Activated naive CD4-positive, alpha-beta T cell treated with anti-CD3 and anti-CD28 coated beads for 36 hours (primary cell): ENCODE measurements at regions of chr1 and their contacts with region 1.

Region 1: DNA sequence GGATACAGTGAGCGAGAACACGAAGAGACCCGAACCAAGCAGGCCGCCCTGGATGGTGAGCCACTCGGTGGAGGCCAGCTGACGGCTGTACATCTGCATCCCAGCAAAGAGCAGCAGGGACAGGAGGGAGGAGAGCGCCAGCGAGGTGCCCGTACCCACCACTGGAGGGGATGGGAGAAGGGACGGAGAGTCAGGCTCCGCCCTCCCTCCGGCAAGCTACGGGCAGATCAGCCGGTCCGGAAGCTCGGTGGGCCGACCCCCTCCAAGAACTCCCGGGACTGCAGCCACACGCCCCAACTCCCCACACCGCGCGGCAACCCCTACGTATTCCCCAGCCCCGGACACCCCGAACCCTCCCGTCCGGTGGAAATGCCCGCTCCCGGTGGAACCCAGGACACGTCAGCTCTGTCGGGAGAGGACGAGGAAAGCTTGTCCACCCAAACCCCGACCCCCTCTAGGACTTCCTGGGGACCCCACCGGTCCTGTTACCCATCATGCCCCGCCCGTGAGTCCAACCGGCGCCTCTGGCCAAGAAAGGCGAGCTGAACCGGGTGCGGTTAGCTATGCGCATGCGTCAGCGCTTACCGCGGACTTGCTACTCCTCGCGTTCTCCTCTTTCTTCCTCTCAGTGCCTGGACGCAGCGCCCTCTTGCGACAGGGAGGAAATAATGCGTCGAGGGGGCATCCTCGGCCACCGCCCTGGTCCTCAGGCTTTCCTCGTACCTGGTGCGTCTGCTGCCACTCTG is at the start of gene KRTCAP2:
- DNase-seq: peak; percentile 98
- H3K4me3 Mint-ChIP-seq: peak within 1 kb of the TSS; percentile 93
- H3K27ac Mint-ChIP-seq: peak within 1 kb of the TSS; percentile 97
- H3K4me1 Mint-ChIP-seq: peaks cover 46% of the 10 kb centered on the region
- H3K27me3 Mint-ChIP-seq: no peaks in the 10 kb centered on the region
- total RNA-seq, gene KRTCAP2: 129 to 137 TPM

Region 2: GRCh38 chr1:155091071-155091709 is 81.7 kb before region 1 on chr1:
- CTCF ChIA-PET with region 1: interaction called, 234 read pairs
- intact Hi-C with region 1: no loop called
- DNase-seq: peak; percentile 84
- H3K4me3 Mint-ChIP-seq: no peak overlapping the region
- H3K27ac Mint-ChIP-seq: no peak overlapping the region
- H3K4me1 Mint-ChIP-seq: peaks cover 6% of the 10 kb centered on the region
- H3K27me3 Mint-ChIP-seq: no peaks in the 10 kb centered on the region

Region 3: GRCh38 chr1:155135415-155136028 is 37.4 kb before region 1 on chr1 and contains the start of gene SLC50A1:
- CTCF ChIA-PET with region 1: interaction called, 10 read pairs
- intact Hi-C with region 1: loop called (anchors 1 kb)
- DNase-seq: peak; percentile 96
- H3K4me3 Mint-ChIP-seq: peak within 1 kb of the TSS; percentile 99
- H3K27ac Mint-ChIP-seq: peak within 1 kb of the TSS; percentile 100
- H3K4me1 Mint-ChIP-seq: peaks cover 32% of the 10 kb centered on the region
- H3K27me3 Mint-ChIP-seq: no peaks in the 10 kb centered on the region
- total RNA-seq, gene SLC50A1: 48.4 to 52.7 TPM

Region 4: DNA sequence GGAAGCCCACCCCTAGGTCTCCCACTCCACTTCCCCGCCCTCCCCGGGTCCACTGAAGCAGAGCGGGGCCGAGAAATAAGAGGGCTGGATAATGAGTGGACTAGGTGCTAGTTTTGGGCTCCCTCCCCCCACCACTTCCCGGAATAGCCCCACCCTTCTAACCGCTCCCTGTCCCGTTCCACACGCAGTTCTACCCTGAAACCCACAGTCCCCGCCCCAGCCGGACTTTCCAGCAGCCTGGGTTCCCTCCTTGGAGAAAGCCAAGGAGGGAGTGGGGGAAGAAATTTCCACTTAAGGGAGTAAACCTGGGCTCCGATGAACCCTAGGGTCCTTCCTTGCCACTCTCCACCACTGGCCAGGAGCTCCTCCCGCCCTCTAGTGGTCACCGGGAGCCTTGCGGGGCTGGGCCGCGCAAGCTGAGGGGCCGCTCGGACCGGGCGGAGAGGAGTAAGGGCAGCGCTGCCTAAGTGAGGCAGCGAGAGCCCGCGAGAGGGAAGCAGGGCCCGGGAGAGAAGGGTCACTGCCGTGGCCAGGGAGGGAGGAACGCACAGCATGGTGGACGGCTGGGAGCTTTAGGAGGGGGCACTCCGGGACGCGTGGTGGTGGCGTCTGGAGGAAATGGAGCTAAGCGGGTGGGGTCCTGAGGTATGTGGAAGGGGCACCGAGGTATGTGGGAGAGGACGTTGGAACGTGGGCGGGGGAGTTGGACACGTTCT is 20.5 kb after region 1 on chr1:
- CTCF ChIA-PET with region 1: interaction called, 79 read pairs
- intact Hi-C with region 1: loop called (anchors 1 kb)
- DNase-seq: peak; percentile 86
- H3K4me3 Mint-ChIP-seq: peak overlapping the region; percentile 93
- H3K27ac Mint-ChIP-seq: peak overlapping the region; percentile 96
- H3K4me1 Mint-ChIP-seq: peaks cover 27% of the 10 kb centered on the region
- H3K27me3 Mint-ChIP-seq: no peaks in the 10 kb centered on the region

Region 5: GRCh38 chr1:155227261-155228095 is 54.6 kb after region 1 on chr1:
- CTCF ChIA-PET with region 1: interaction called, 14 read pairs
- intact Hi-C with region 1: loop called (anchors 1 kb)
- DNase-seq: peak; percentile 100
- H3K4me3 Mint-ChIP-seq: peak overlapping the region; percentile 89
- H3K27ac Mint-ChIP-seq: peak overlapping the region; percentile 96
- H3K4me1 Mint-ChIP-seq: peaks cover 31% of the 10 kb centered on the region
- H3K27me3 Mint-ChIP-seq: no peaks in the 10 kb centered on the region